ENCODE measurements at regions of chr3 and their contacts with region 1.

Region 1: DNA sequence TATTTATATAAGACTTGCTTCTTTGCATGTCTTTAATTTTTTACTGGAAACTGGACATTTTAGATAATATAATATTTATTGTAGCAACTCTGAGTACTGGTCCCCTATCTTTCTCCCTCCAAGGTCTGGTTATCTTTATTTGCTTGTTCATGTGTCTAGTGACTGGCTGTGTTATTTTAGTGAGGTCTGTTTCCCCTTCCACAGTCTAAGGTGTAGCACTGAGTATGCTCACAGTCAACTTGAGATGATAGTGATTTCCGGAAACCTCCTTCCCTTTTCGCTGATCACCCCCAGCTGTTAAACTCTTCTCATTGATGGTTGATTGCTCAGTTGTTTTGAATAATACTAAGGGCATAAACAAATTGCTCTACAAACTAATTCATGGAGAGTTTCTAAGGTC is 37.0 kb downstream of the PCNP start:
- DNase-seq: no peak
- ATAC-seq: no peak
- H3K4me3 Mint-ChIP-seq: no peak overlapping the region
- H3K27ac Mint-ChIP-seq: no peak overlapping the region
- H3K4me1 Mint-ChIP-seq: no peaks in the 10 kb centered on the region
- H3K27me3 Mint-ChIP-seq: no peaks in the 10 kb centered on the region

Region 2: GRCh38 chr3:101588616-101589015 is 22.4 kb before region 1 on chr3:
- CTCF ChIA-PET with region 1: interaction called, 4 read pairs
- POLR2A ChIA-PET with region 1: interaction called, 11 read pairs
- intact Hi-C with region 1: no loop called
- DNase-seq: no peak
- ATAC-seq: no peak
- H3K4me3 Mint-ChIP-seq: no peak overlapping the region
- H3K27ac Mint-ChIP-seq: peak overlapping the region; percentile 3
- H3K4me1 Mint-ChIP-seq: peaks cover 24% of the 10 kb centered on the region
- H3K27me3 Mint-ChIP-seq: no peaks in the 10 kb centered on the region

Region 3: DNA sequence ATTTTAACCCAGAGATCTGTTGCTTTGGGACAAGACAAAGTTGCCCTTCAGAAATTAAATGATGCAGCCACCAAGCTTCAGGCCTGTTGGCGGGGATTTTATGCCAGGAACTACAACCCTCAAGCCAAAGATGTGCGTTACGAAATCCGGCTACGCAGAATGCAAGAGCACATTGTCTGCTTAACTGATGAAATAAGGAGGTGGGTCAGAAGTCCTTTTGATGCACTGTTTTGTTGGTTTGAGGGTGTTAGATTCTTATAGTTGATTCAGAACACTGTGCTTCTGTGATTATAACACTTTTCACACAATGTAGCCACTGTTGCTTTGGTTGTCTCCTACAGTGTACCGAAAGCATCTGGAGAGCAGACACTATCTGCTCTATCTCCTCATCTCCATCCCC is 147.2 kb after region 1 on chr3:
- CTCF ChIA-PET with region 1: no interaction called
- POLR2A ChIA-PET with region 1: interaction called, 10 read pairs
- intact Hi-C with region 1: no loop called
- DNase-seq: no peak
- ATAC-seq: no peak
- H3K4me3 Mint-ChIP-seq: no peak overlapping the region
- H3K27ac Mint-ChIP-seq: no peak overlapping the region
- H3K4me1 Mint-ChIP-seq: peaks cover 13% of the 10 kb centered on the region
- H3K27me3 Mint-ChIP-seq: no peaks in the 10 kb centered on the region